Activated CD4-positive, alpha-beta T cell treated with anti-CD3 and anti-CD28 coated beads for 36 hours (primary cell): ENCODE measurements at regions of chr15 and their contacts with region 1.

Region 1: GRCh38 chr15:66386204-66387123 is at the start of gene MAP2K1:
- DNase-seq: peak; percentile 99
- ATAC-seq: peak; percentile 84
- H3K4me3 Mint-ChIP-seq: peak within 1 kb of the TSS; percentile 95
- H3K27ac Mint-ChIP-seq: peak within 1 kb of the TSS; percentile 100
- H3K4me1 Mint-ChIP-seq: peaks cover 44% of the 10 kb centered on the region
- H3K27me3 Mint-ChIP-seq: no peaks in the 10 kb centered on the region
- total RNA-seq, gene MAP2K1: 94.9 to 115 TPM

Region 2: DNA sequence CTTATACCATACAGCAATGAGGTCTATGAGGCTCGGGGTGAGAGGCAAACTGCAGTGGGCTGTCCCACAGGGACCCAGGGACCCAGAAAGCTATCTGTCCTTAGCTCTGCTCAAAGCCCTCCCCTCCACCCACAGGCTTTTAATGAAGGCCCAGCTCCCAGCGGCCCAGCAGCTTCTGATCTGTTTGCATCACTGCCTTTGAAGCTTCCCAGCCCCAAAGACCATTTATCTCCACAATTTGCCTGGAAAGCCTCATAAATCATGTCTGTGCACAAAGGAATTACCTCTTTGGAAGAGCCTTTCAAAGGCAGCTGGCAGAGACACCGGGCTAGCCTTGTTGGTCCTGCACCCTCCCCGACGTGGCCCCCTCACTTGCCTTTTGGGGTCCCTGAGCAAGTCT is 393.2 kb before region 1 on chr15:
- CTCF ChIA-PET with region 1: no interaction called
- POLR2A ChIA-PET with region 1: no interaction called
- intact Hi-C with region 1: no loop called
- DNase-seq: no peak
- ATAC-seq: no peak
- H3K4me3 Mint-ChIP-seq: no peak overlapping the region
- H3K27ac Mint-ChIP-seq: no peak overlapping the region
- H3K4me1 Mint-ChIP-seq: no peaks in the 10 kb centered on the region
- H3K27me3 Mint-ChIP-seq: peaks cover 28% of the 10 kb centered on the region

Region 3: GRCh38 chr15:66293419-66294156 is 92.9 kb before region 1 on chr15 and contains the start of gene DIS3L:
- CTCF ChIA-PET with region 1: no interaction called
- POLR2A ChIA-PET with region 1: no interaction called
- intact Hi-C with region 1: loop called in 1 of 2 experiments (anchors 1 kb)
- DNase-seq: peak; percentile 75
- ATAC-seq: peak; percentile 80
- H3K4me3 Mint-ChIP-seq: peak within 1 kb of the TSS; percentile 86
- H3K27ac Mint-ChIP-seq: peak within 1 kb of the TSS; percentile 90
- H3K4me1 Mint-ChIP-seq: peaks cover 49% of the 10 kb centered on the region
- H3K27me3 Mint-ChIP-seq: no peaks in the 10 kb centered on the region
- total RNA-seq, gene DIS3L: 24.6 to 25.9 TPM

Region 4: GRCh38 chr15:66369773-66370651 is 16.5 kb before region 1 on chr15:
- CTCF ChIA-PET with region 1: interaction called, 3 read pairs
- POLR2A ChIA-PET with region 1: interaction called, 6 read pairs
- intact Hi-C with region 1: loop called in 1 of 2 experiments (anchors 1 kb)
- DNase-seq: peak; percentile 64
- ATAC-seq: peak; percentile 83
- H3K4me3 Mint-ChIP-seq: peak overlapping the region; percentile 47
- H3K27ac Mint-ChIP-seq: peak overlapping the region; percentile 96
- H3K4me1 Mint-ChIP-seq: peaks cover 15% of the 10 kb centered on the region
- H3K27me3 Mint-ChIP-seq: no peaks in the 10 kb centered on the region

Region 5: GRCh38 chr15:66401130-66402021 is 14.9 kb after region 1 on chr15:
- CTCF ChIA-PET with region 1: interaction called, 7 read pairs
- POLR2A ChIA-PET with region 1: no interaction called
- intact Hi-C with region 1: loop called (anchors 1 kb)
- DNase-seq: peak; percentile 43
- ATAC-seq: peak; percentile 74
- H3K4me3 Mint-ChIP-seq: peak overlapping the region; percentile 50
- H3K27ac Mint-ChIP-seq: peak overlapping the region; percentile 69
- H3K4me1 Mint-ChIP-seq: peaks cover 75% of the 10 kb centered on the region
- H3K27me3 Mint-ChIP-seq: no peaks in the 10 kb centered on the region

Region 6: GRCh38 chr15:66504563-66505429 is 118.3 kb after region 1 on chr15 and contains the starts of genes RPL4 and ZWILCH:
- CTCF ChIA-PET with region 1: interaction called, 15 read pairs
- POLR2A ChIA-PET with region 1: interaction called, 4 read pairs
- intact Hi-C with region 1: loop called (anchors 1 to 2 kb)
- DNase-seq: peak; percentile 85
- ATAC-seq: peak; percentile 89
- H3K4me3 Mint-ChIP-seq: peak within 1 kb of the TSS; percentile 88
- H3K27ac Mint-ChIP-seq: peak within 1 kb of the TSS; percentile 98
- H3K4me1 Mint-ChIP-seq: peaks cover 56% of the 10 kb centered on the region
- H3K27me3 Mint-ChIP-seq: no peaks in the 10 kb centered on the region
- total RNA-seq, gene RPL4: 4,227 to 4,959 TPM
- total RNA-seq, gene ZWILCH: 27.4 to 31.1 TPM

Region 7: DNA sequence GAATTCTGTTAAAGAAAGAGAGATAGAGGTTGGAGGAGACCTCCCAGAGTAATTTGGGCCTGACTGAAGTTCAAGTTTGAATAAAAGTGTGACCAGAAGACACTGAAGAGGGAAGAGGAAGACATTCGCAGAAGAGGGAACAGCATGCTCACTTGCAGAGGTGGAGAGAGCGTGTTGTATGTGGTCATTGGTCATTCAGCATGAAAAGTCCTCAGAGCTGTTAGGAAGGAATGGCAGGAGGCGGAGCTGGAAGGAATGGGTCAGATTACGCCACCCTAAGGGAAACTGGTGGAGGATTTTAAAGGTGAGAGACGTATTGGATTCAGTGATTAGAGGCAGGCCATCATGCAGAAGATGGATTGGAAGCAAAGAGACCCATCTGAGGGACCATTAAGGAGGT is 909.7 kb after region 1 on chr15:
- CTCF ChIA-PET with region 1: no interaction called
- POLR2A ChIA-PET with region 1: no interaction called
- intact Hi-C with region 1: no loop called
- DNase-seq: no peak
- ATAC-seq: no peak
- H3K4me3 Mint-ChIP-seq: no peak overlapping the region
- H3K27ac Mint-ChIP-seq: no peak overlapping the region
- H3K4me1 Mint-ChIP-seq: no peaks in the 10 kb centered on the region
- H3K27me3 Mint-ChIP-seq: peaks cover 2% of the 10 kb centered on the region